Mammary epithelial cell (primary cell): ENCODE measurements at regions of chr3 and their contacts with region 1.

Region 1: DNA sequence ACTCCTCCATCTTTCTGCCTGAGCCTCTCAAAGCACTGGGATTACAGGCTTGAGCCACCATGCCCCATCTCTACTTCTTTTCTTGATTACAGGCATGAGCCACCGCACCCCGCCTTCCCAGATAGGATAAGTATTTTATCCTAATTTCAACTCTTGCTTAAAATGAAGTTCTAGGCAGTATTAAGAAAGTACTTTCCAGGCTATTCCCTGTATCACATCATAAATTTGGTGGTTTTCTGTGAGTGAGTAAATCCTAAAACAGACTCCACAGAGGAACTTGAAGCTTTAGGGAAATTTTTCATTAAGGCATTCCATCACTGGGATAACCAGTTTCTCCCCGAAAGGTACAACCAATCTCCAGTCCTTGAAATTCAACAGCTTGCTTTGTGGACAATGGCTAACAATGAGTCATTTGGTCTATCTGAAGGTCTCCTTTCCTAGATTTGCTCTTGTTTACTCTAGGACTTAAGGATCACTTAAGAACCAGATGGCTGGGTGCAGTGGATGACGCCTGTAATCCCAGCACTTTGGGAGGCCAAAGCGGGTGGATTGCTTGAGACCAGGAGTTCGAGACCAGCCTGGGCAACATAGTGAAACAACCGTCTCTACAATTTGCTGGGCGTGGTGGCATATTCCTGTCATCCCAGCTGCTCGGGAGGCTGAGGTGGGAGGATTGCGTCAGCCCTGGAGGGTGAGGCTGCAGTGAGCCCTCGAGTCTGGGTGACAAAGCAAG is 49.7 kb upstream of the SKIL start:
- DNase-seq: peak; percentile 38
- H3K4me3 ChIP-seq: no peak overlapping the region
- H3K27ac ChIP-seq: no peak overlapping the region
- H3K4me1 ChIP-seq: no peaks in the 10 kb centered on the region
- H3K27me3 ChIP-seq: no peaks in the 10 kb centered on the region
- CTCF ChIP-seq: no peak

Region 2: DNA sequence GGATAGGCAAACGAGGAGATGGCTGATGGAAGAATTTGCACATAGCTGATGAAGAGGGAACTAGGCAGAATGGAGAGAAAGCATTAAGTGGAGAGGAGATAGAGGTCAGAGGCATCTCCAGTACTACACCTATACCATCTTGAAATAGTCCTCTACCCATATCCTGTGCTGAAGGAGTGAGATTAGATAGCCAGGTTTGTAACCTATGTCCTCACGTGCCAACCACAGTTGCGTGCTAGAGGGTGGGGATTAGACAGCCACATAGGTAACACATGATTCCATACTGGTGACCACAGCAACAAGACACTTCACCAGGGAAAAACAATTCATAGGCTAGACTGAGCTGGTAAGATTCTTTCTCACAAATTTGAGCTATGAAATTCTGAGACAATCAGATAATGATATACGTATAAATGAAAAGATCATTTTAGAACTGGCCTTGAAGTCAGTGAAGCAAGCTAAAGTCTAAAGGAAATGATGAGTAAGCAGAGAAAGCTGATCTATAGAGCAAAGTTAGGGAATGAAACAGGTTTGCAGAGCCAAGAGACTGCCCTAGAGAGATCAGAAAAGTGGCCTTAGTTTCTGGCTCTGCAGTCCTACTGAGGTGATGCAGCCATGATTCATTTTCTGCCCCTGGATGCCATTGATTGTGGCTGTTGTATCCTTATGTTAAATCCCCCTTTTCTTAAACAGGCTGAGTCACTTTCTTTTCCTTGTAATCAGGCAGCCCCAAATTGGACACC is 517.0 kb before region 1 on chr3:
- CTCF ChIA-PET with region 1: no interaction called
- dilution Hi-C with region 1: no loop called
- in situ Hi-C with region 1: no loop called
- intact Hi-C with region 1: no loop called
- DNase-seq: no peak
- H3K4me3 ChIP-seq: no peak overlapping the region
- H3K27ac ChIP-seq: no peak overlapping the region
- H3K4me1 ChIP-seq: no peaks in the 10 kb centered on the region
- H3K27me3 ChIP-seq: no peaks in the 10 kb centered on the region
- CTCF ChIP-seq: no peak

Region 3: GRCh38 chr3:170205302-170205701 is 102.5 kb before region 1 on chr3:
- CTCF ChIA-PET with region 1: no interaction called
- dilution Hi-C with region 1: no loop called
- in situ Hi-C with region 1: no loop called
- intact Hi-C with region 1: no loop called
- DNase-seq: no peak
- H3K4me3 ChIP-seq: no peak overlapping the region
- H3K27ac ChIP-seq: no peak overlapping the region
- H3K4me1 ChIP-seq: no peaks in the 10 kb centered on the region
- H3K27me3 ChIP-seq: no peaks in the 10 kb centered on the region
- CTCF ChIP-seq: no peak

Region 4: DNA sequence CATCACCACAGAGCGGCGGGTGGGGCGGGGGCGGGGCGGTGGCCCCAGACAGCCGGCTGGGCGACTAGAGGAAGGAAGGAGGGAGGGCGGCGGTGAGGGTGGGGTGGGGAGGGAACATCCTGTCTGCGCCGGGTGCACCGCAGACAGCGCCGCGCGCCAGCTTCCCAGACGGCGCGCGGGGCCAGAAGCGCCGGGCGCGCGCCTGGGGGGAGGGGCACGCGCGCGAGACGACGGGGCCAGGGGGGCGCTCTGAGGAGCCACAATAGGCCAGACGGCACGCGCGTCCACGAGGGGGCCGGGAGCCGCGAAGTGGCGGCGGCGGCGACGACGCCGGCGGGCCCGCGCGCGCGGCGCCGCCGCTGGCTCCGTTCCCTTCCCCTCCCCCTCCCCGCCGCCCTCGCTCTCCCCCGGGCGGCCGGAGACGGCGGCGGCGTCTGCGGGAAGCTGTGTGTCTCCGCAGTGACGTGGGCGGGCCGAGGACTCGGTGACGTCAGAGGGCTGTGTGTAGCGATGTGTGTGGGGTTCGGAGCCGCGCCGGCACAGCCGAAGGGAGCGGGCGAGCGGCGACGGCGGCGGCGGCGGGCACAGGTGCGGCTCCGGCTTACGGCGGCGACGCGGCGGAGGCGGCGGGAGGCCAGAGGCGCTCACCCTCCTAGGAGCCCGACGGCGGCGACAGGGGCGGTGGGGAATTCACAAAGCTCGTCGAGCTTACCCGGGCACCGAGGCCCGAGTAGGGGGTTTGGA is 49.5 kb after region 1 on chr3 and contains the start of gene SKIL:
- CTCF ChIA-PET with region 1: no interaction called
- dilution Hi-C with region 1: no loop called
- in situ Hi-C with region 1: no loop called
- intact Hi-C with region 1: loop called (anchors 1 kb)
- DNase-seq: peak; percentile 95
- H3K4me3 ChIP-seq: peak within 1 kb of the TSS; percentile 78 to 89 (median 86)
- H3K27ac ChIP-seq: peak within 1 kb of the TSS; percentile 77
- H3K4me1 ChIP-seq: peaks cover 21% of the 10 kb centered on the region
- H3K27me3 ChIP-seq: no peaks in the 10 kb centered on the region
- CTCF ChIP-seq: peak in 1 of 2 donors; percentile 37
- total RNA-seq, gene SKIL: 28.6 to 38.8 TPM

Region 5: GRCh38 chr3:170368921-170369320 is 61.1 kb after region 1 on chr3:
- CTCF ChIA-PET with region 1: no interaction called
- dilution Hi-C with region 1: no loop called
- in situ Hi-C with region 1: no loop called
- intact Hi-C with region 1: loop called (anchors 2 kb)
- DNase-seq: no peak
- H3K4me3 ChIP-seq: no peak overlapping the region
- H3K27ac ChIP-seq: no peak overlapping the region
- H3K4me1 ChIP-seq: no peaks in the 10 kb centered on the region
- H3K27me3 ChIP-seq: no peaks in the 10 kb centered on the region
- CTCF ChIP-seq: peak; percentile 3 to 36

Region 6: GRCh38 chr3:170387950-170388349 is 80.1 kb after region 1 on chr3:
- CTCF ChIA-PET with region 1: no interaction called
- dilution Hi-C with region 1: loop called (anchors 5 kb)
- in situ Hi-C with region 1: no loop called
- intact Hi-C with region 1: no loop called
- DNase-seq: no peak
- H3K4me3 ChIP-seq: no peak overlapping the region
- H3K27ac ChIP-seq: no peak overlapping the region
- H3K4me1 ChIP-seq: no peaks in the 10 kb centered on the region
- H3K27me3 ChIP-seq: no peaks in the 10 kb centered on the region
- CTCF ChIP-seq: no peak

Region 7: GRCh38 chr3:170848292-170848917 is 540.6 kb after region 1 on chr3:
- CTCF ChIA-PET with region 1: no interaction called
- dilution Hi-C with region 1: no loop called
- in situ Hi-C with region 1: no loop called
- intact Hi-C with region 1: loop called (anchors 2 kb)
- DNase-seq: no peak
- H3K4me3 ChIP-seq: no peak overlapping the region
- H3K27ac ChIP-seq: no peak overlapping the region
- H3K4me1 ChIP-seq: no peaks in the 10 kb centered on the region
- H3K27me3 ChIP-seq: no peaks in the 10 kb centered on the region
- CTCF ChIP-seq: peak; percentile 46 to 59